Activated CD8-positive, alpha-beta T cell treated with anti-CD3 and anti-CD28 coated beads, Interleukin-2, amount 10 ng/mL, durations not matched to agents 7 days and 5 days (primary cell): ENCODE measurements at regions of chr14 and their contacts with region 1.

Region 1: DNA sequence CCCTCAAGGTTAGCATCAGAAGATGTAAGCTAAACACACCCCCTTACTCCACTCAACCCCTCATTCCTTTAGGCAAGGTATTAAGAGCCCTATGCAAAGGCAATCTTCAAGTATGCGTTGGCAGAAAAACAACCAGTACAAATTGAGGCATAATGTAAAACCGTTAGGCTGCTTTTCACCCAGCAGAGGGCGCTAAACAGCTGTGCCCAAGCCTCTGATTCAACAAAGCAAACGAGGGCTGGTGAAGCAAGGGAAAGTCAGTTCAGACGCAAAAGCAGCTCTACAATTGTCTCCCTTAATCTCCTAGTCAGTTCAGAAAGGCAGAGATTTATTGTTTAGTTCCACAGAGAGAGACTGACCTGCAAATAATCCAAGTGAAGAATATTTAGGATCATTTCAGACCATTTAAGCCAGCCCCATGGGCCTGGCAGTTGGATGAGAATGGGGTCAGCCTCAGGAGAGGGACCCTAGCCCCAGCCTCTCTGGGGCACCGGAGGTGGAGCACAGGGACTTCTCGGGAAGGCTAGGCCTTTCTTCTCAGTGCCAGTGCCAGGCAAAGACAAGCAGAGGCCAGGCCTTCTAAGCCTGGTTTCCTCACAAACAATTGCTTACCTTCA is 23.5 kb downstream of the DCAF5 start:
- DNase-seq: peak; percentile 82
- ATAC-seq: peak; percentile 87
- H3K4me3 Mint-ChIP-seq: no peak overlapping the region
- H3K27ac Mint-ChIP-seq: no peak overlapping the region
- H3K4me1 Mint-ChIP-seq: peaks cover 32% of the 10 kb centered on the region
- H3K27me3 Mint-ChIP-seq: no peaks in the 10 kb centered on the region

Region 2: DNA sequence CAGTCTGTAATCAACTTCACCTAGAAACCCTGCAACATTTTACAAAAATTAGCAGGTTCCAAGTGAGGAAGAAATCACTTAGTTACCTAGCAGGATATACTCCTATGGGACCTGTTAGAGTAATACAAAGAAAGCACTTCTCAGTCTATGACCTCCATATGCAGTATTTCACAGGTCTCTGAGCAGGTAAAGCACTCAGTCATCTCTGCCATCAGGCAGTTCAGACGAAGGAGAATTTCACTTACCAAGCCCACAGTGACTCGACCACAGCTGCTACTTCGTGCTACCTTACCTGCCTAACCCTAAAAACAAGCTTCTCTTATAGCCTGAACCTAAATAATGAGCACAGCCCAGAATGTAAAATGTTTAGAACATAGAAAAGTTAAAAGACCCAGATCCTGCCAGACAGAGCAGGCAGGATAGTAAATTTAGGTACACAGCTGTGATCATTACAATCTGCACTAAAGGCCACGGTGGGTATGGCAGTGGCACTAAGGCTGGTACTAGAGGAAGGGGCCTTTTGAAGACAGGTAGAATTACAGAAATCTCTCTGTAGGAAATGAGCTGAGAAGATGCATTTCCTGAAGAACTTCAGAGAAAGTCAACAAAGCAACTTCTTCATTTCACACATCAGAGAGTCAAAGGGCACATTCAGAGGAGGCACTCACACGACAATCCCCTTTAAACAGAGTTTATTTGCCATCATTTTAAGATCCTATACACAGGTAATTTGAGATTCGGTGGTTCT is 12.2 kb before region 1 on chr14:
- CTCF ChIA-PET with region 1: interaction called, 14 read pairs
- POLR2A ChIA-PET with region 1: no interaction called
- DNase-seq: no peak
- ATAC-seq: no peak
- H3K4me3 Mint-ChIP-seq: no peak overlapping the region
- H3K27ac Mint-ChIP-seq: peak overlapping the region; percentile 36
- H3K4me1 Mint-ChIP-seq: peaks cover 18% of the 10 kb centered on the region
- H3K27me3 Mint-ChIP-seq: no peaks in the 10 kb centered on the region

Region 3: GRCh38 chr14:69153131-69153872 is 23.9 kb after region 1 on chr14:
- CTCF ChIA-PET with region 1: interaction called, 56 read pairs
- POLR2A ChIA-PET with region 1: interaction called, 5 read pairs
- DNase-seq: peak; percentile 97
- ATAC-seq: peak; percentile 95
- H3K4me3 Mint-ChIP-seq: peak overlapping the region; percentile 92
- H3K27ac Mint-ChIP-seq: peak overlapping the region; percentile 86
- H3K4me1 Mint-ChIP-seq: peaks cover 31% of the 10 kb centered on the region
- H3K27me3 Mint-ChIP-seq: peaks cover 24% of the 10 kb centered on the region

Region 4: GRCh38 chr14:69191340-69192111 is 62.2 kb after region 1 on chr14 and contains the start of gene EXD2:
- CTCF ChIA-PET with region 1: interaction called, 22 read pairs
- POLR2A ChIA-PET with region 1: no interaction called
- DNase-seq: peak; percentile 76
- ATAC-seq: peak; percentile 82
- H3K4me3 Mint-ChIP-seq: peak within 1 kb of the TSS; percentile 88
- H3K27ac Mint-ChIP-seq: peak within 1 kb of the TSS; percentile 74
- H3K4me1 Mint-ChIP-seq: peaks cover 20% of the 10 kb centered on the region
- H3K27me3 Mint-ChIP-seq: peaks cover 4% of the 10 kb centered on the region
- total RNA-seq, gene EXD2: 3.4 to 4.2 TPM

Region 5: GRCh38 chr14:69242311-69243224 is 113.2 kb after region 1 on chr14:
- CTCF ChIA-PET with region 1: interaction called, 22 read pairs
- POLR2A ChIA-PET with region 1: no interaction called
- DNase-seq: peak; percentile 71
- ATAC-seq: peak; percentile 63
- H3K4me3 Mint-ChIP-seq: no peak overlapping the region
- H3K27ac Mint-ChIP-seq: no peak overlapping the region
- H3K4me1 Mint-ChIP-seq: peaks cover 2% of the 10 kb centered on the region
- H3K27me3 Mint-ChIP-seq: peaks cover 5% of the 10 kb centered on the region